ENCODE measurements at regions of chr13 and their contacts with region 1.

Region 1: DNA sequence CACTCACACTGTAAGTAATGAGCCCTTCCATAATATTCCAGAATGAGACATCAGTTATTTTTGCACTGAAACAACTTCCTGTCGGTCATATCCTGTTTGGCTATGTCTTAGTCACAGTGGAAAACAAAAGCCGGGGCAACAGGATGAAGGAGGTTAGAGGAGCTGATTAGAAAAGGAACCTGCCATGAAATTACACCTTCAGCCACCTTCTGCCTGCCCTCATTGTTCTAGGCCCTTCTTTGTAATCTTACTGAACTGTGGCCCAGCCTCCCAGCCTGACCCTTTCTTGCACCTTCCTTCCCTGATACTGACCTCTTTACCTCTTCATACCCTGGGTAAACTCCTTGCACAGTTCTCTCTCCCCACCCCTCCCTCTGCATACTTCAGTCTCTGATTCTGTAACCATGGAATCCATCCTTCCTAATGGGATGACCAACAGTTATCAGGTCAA is 67.3 kb downstream of the DOCK9 start:
- DNase-seq: peak in 1 of 2 donors; percentile 56
- ATAC-seq: peak; percentile 83 to 96 (median 92)
- H3K4me3 ChIP-seq: no peak overlapping the region
- H3K27ac ChIP-seq: peak overlapping the region; percentile 61 to 81 (median 73)
- H3K4me1 ChIP-seq: peaks cover 4 to 65% (median 33%) of the 10 kb centered on the region in 9 donors
- H3K27me3 ChIP-seq: no peaks in the 10 kb centered on the region
- CTCF ChIP-seq: no peak

Region 2: GRCh38 chr13:98959786-98960605 is 49.5 kb after region 1 on chr13:
- intact Hi-C with region 1: loop called in 1 of 10 experiments (anchors 10 kb)
- DNase-seq: no peak
- ATAC-seq: peak; percentile 15 to 80 (median 65)
- H3K4me3 ChIP-seq: no peak overlapping the region
- H3K27ac ChIP-seq: peak overlapping the region; percentile 50 to 85 (median 72)
- H3K4me1 ChIP-seq: peaks cover 25 to 75% (median 64%) of the 10 kb centered on the region in 9 donors
- H3K27me3 ChIP-seq: no peaks in the 10 kb centered on the region
- CTCF ChIP-seq: peak in 3 of 9 donors; percentile 9 to 31 (median 17)

Region 3: GRCh38 chr13:98977568-98978265 is 67.2 kb after region 1 on chr13 and contains the start of gene DOCK9:
- intact Hi-C with region 1: loop called in 4 of 10 experiments (anchors 5 kb)
- DNase-seq: peak; percentile 73 to 77
- ATAC-seq: peak; percentile 87 to 97 (median 93)
- H3K4me3 ChIP-seq: peak within 1 kb of the TSS; percentile 39 to 68 (median 58)
- H3K27ac ChIP-seq: peak within 1 kb of the TSS; percentile 41 to 88 (median 72)
- H3K4me1 ChIP-seq: peaks cover 0 to 71% (median 33%) of the 10 kb centered on the region in 9 donors
- H3K27me3 ChIP-seq: no peaks in the 10 kb centered on the region
- CTCF ChIP-seq: peak in 2 of 9 donors; percentile 19 to 20
- total RNA-seq, gene DOCK9: 31.6 to 73.7 (median 43.4) TPM

Measured in heart right ventricle (tissue), 16 donors.